ENCODE measurements at regions of chr2 and their contacts with region 1.

Region 1: GRCh38 chr2:128727914-128728313 is 409.2 kb upstream of the HS6ST1 start:
- DNase-seq: peak in 1 of 4 donors; percentile 31
- ATAC-seq: no peak
- H3K4me3 ChIP-seq: no peak overlapping the region
- H3K27ac ChIP-seq: no peak overlapping the region
- H3K4me1 ChIP-seq: no peaks in the 10 kb centered on the region
- H3K27me3 ChIP-seq: no peaks in the 10 kb centered on the region
- CTCF ChIP-seq: no peak
- POLR2A ChIP-seq: no peak

Region 2: DNA sequence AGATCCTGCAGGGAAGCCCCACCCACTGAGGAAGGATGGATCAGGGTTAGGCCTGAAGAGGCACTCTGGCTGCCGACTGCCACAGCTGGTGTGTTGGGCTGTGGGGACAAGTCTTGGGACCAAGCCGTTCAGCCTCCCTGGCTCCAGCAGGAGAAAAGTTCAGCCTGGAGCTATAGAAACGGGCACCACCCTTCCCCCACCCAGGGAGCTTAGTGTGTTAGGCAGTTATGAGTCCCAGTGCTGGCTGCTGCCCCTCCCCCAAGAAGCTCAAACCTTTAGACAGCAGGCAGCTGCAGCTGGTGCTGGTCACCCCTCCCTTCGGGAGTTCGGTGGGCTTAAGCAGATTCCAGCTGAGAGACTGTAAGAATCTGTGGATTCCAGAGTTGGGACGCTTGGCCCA is 37.9 kb after region 1 on chr2:
- intact Hi-C with region 1: no loop called
- DNase-seq: no peak
- ATAC-seq: no peak
- H3K4me3 ChIP-seq: no peak overlapping the region
- H3K27ac ChIP-seq: no peak overlapping the region
- H3K4me1 ChIP-seq: no peaks in the 10 kb centered on the region
- H3K27me3 ChIP-seq: no peaks in the 10 kb centered on the region
- CTCF ChIP-seq: no peak
- POLR2A ChIP-seq: no peak

Region 3: DNA sequence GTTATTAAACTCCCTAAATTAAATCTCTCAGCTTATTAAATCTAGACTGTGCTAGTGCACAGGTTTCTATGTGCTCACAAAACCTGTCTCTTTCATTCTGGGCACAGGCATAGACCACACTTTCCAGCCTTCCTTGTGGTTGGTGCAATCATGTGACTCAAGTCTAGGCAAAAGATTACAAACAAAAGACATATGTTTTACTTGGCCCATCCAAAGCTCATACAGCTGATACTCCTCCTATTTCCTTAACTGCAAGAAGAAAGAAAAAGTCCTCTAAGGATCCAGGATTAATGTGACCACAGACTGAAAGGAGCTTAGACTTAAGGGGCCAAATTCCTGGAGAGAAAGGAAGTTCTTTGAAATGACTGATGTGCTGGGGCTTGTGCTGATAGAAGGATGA is 520.3 kb after region 1 on chr2:
- intact Hi-C with region 1: loop called (anchors 10 kb)
- DNase-seq: no peak
- ATAC-seq: no peak
- H3K4me3 ChIP-seq: no peak overlapping the region
- H3K27ac ChIP-seq: no peak overlapping the region
- H3K4me1 ChIP-seq: no peaks in the 10 kb centered on the region
- H3K27me3 ChIP-seq: no peaks in the 10 kb centered on the region
- CTCF ChIP-seq: no peak
- POLR2A ChIP-seq: no peak

Measured in body of pancreas (tissue), 4 donors.